HepG2 (cell line): ENCODE measurements at regions of chr2 and their contacts with region 1.

Region 1: GRCh38 chr2:190648289-190649034 is 421 bp upstream of the NAB1 start:
- DNase-seq: peak; percentile 58
- ATAC-seq: peak; percentile 86
- H3K4me3 ChIP-seq: peak overlapping the region; percentile 93 to 94 (median 93)
- H3K27ac ChIP-seq: peak overlapping the region; percentile 58
- H3K4me1 ChIP-seq: peaks cover 34% of the 10 kb centered on the region
- H3K27me3 ChIP-seq: no peaks in the 10 kb centered on the region; a peak in 1 of 5 replicates
- CTCF ChIP-seq: no peak
- EP300 ChIP-seq: no peak
- POLR2A ChIP-seq: peak; percentile 50 to 72
- RAD21 ChIP-seq: no peak

Region 2: GRCh38 chr2:190334479-190335224 is 313.8 kb before region 1 on chr2:
- CTCF ChIA-PET with region 1: no interaction called
- POLR2A ChIA-PET with region 1: no interaction called
- in situ Hi-C with region 1: no loop called
- intact Hi-C with region 1: loop called (anchors 10 kb)
- DNase-seq: peak; percentile 96
- ATAC-seq: peak; percentile 96
- H3K4me3 ChIP-seq: peak overlapping the region; percentile 59 to 70 (median 67); a peak in 5 of 6 replicates
- H3K27ac ChIP-seq: peak overlapping the region; percentile 84
- H3K4me1 ChIP-seq: peaks cover 54% of the 10 kb centered on the region
- H3K27me3 ChIP-seq: no peaks in the 10 kb centered on the region
- CTCF ChIP-seq: 0 out of 2 replicates have a peak, but pooled peaks have one; percentile 25
- EP300 ChIP-seq: peak; percentile 85 to 96
- POLR2A ChIP-seq: peak; percentile 72 to 77
- RAD21 ChIP-seq: no peak

Region 3: DNA sequence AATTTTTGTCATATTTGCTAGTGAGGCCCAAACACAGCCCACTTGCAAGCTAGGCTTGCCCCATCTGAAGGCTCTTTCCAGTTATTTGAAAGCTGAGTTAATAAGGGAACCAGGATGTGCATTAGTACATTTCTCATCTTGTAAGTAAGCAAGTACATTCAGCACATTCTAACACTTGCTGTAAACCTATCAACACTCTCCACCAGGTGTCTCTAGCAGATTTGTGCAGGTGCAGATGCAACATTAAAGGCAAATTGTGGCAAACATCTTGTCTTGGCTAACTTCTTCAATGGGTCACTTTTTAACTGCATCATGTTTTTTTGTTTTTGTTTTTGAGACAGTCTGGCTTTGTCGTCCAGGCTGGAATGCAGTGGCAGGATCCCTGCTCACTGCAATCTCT is 265.6 kb before region 1 on chr2:
- CTCF ChIA-PET with region 1: no interaction called
- POLR2A ChIA-PET with region 1: no interaction called
- in situ Hi-C with region 1: no loop called
- intact Hi-C with region 1: loop called (anchors 10 kb)
- DNase-seq: peak; percentile 62
- ATAC-seq: peak; percentile 76
- H3K4me3 ChIP-seq: no peak overlapping the region
- H3K27ac ChIP-seq: no peak overlapping the region
- H3K4me1 ChIP-seq: peaks cover 23% of the 10 kb centered on the region
- H3K27me3 ChIP-seq: no peaks in the 10 kb centered on the region; a peak in 1 of 5 replicates
- CTCF ChIP-seq: peak; percentile 77
- EP300 ChIP-seq: no peak
- POLR2A ChIP-seq: no peak
- RAD21 ChIP-seq: peak; percentile 60

Region 4: GRCh38 chr2:190534310-190535120 is 113.9 kb before region 1 on chr2 and contains the start of gene NEMP2:
- CTCF ChIA-PET with region 1: no interaction called
- POLR2A ChIA-PET with region 1: interaction called, 9 read pairs
- in situ Hi-C with region 1: no loop called
- intact Hi-C with region 1: loop called (anchors 2 kb)
- DNase-seq: peak; percentile 77
- ATAC-seq: peak; percentile 91
- H3K4me3 ChIP-seq: peak within 1 kb of the TSS; percentile 77 to 90 (median 85)
- H3K27ac ChIP-seq: peak within 1 kb of the TSS; percentile 91
- H3K4me1 ChIP-seq: peaks cover 50% of the 10 kb centered on the region
- H3K27me3 ChIP-seq: no peaks in the 10 kb centered on the region
- CTCF ChIP-seq: peak; percentile 37; the same call in 1 of the 2 replicates
- EP300 ChIP-seq: peak; percentile 32 to 36; a peak in 2 of 4 replicates
- POLR2A ChIP-seq: peak; percentile 90
- RAD21 ChIP-seq: peak; percentile 75
- total RNA-seq, gene NEMP2: 7.8 and 9.8 TPM in 2 replicates

Region 5: GRCh38 chr2:190668892-190669291 is 20.4 kb after region 1 on chr2:
- CTCF ChIA-PET with region 1: no interaction called
- POLR2A ChIA-PET with region 1: no interaction called
- in situ Hi-C with region 1: no loop called
- intact Hi-C with region 1: loop called (anchors 2 kb)
- DNase-seq: no peak
- ATAC-seq: peak; percentile 56; the same call in 1 of the 3 replicates
- H3K4me3 ChIP-seq: no peak overlapping the region
- H3K27ac ChIP-seq: no peak overlapping the region
- H3K4me1 ChIP-seq: no peaks in the 10 kb centered on the region
- H3K27me3 ChIP-seq: no peaks in the 10 kb centered on the region
- CTCF ChIP-seq: no peak
- EP300 ChIP-seq: no peak
- POLR2A ChIP-seq: no peak
- RAD21 ChIP-seq: no peak

Region 6: DNA sequence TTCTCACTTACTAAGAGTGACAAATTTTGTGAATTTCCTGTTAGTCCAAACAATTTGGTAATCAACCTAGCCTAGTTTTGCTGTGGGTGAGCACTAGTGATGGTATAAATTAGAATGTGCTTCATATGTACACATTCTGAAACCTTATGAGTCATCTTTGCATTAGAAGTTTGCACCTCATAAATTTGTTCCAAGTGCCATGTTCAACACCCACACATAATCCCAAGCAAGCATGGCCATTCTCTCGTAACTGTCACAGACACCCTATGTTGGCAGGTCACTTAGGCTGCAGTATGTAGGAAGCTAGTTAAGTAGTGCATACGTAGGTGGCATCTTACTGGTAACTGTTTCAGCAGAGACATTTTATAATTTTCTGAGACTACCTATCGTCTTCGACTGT is 47.3 kb after region 1 on chr2:
- CTCF ChIA-PET with region 1: no interaction called
- POLR2A ChIA-PET with region 1: no interaction called
- in situ Hi-C with region 1: no loop called
- intact Hi-C with region 1: loop called (anchors 2 kb)
- DNase-seq: no peak
- ATAC-seq: no peak
- H3K4me3 ChIP-seq: no peak overlapping the region
- H3K27ac ChIP-seq: no peak overlapping the region
- H3K4me1 ChIP-seq: peaks cover 13% of the 10 kb centered on the region
- H3K27me3 ChIP-seq: peaks cover 0 to 2% of the 10 kb centered on the region in 2 experiments; a peak in 1 of 5 replicates
- CTCF ChIP-seq: no peak
- EP300 ChIP-seq: no peak
- POLR2A ChIP-seq: no peak
- RAD21 ChIP-seq: no peak